Heart left ventricle (tissue), 16 donors: ENCODE measurements at regions of chr3 and their contacts with region 1.

Region 1: GRCh38 chr3:30779686-30780287 is 114.7 kb downstream of the GADL1 start:
- DNase-seq: no peak
- ATAC-seq: peak in 2 of 4 donors; percentile 36 to 41
- H3K4me3 ChIP-seq: no peak overlapping the region
- H3K27ac ChIP-seq: no peak overlapping the region
- H3K4me1 ChIP-seq: no peaks in the 10 kb centered on the region
- H3K27me3 ChIP-seq: no peaks in the 10 kb centered on the region
- CTCF ChIP-seq: peak in 11 of 12 donors; percentile 11 to 53 (median 28)
- POLR2A ChIP-seq: no peak

Region 2: GRCh38 chr3:29582273-29582672 is 1197.5 kb before region 1 on chr3:
- intact Hi-C with region 1: no loop called
- DNase-seq: no peak
- ATAC-seq: no peak
- H3K4me3 ChIP-seq: no peak overlapping the region
- H3K27ac ChIP-seq: no peak overlapping the region
- H3K4me1 ChIP-seq: peaks cover 0 to 35% (median under 1%) of the 10 kb centered on the region in 12 donors
- H3K27me3 ChIP-seq: no peaks in the 10 kb centered on the region
- CTCF ChIP-seq: no peak
- POLR2A ChIP-seq: no peak

Region 3: GRCh38 chr3:31004025-31004678 is 224.4 kb after region 1 on chr3:
- intact Hi-C with region 1: loop called in 1 of 10 experiments (anchors 10 kb)
- DNase-seq: no peak
- ATAC-seq: peak in 2 of 4 donors; percentile 45 to 47
- H3K4me3 ChIP-seq: no peak overlapping the region
- H3K27ac ChIP-seq: no peak overlapping the region
- H3K4me1 ChIP-seq: peaks cover 0 to 6% (median 0%) of the 10 kb centered on the region in 12 donors
- H3K27me3 ChIP-seq: no peaks in the 10 kb centered on the region
- CTCF ChIP-seq: no peak
- POLR2A ChIP-seq: no peak

Region 4: GRCh38 chr3:31132132-31132769 is 352.5 kb after region 1 on chr3:
- intact Hi-C with region 1: loop called in 2 of 10 experiments (anchors 5 kb)
- DNase-seq: no peak
- ATAC-seq: peak in 2 of 4 donors; percentile 52 to 61
- H3K4me3 ChIP-seq: no peak overlapping the region
- H3K27ac ChIP-seq: no peak overlapping the region
- H3K4me1 ChIP-seq: no peaks in the 10 kb centered on the region
- H3K27me3 ChIP-seq: no peaks in the 10 kb centered on the region
- CTCF ChIP-seq: peak in 11 of 12 donors; percentile 32 to 74 (median 62)
- POLR2A ChIP-seq: no peak

Region 5: GRCh38 chr3:31768479-31769123 is 988.8 kb after region 1 on chr3:
- intact Hi-C with region 1: loop called in 2 of 10 experiments (anchors 10 kb)
- DNase-seq: peak in 4 of 5 donors; percentile 43 to 62 (median 56)
- ATAC-seq: peak; percentile 62 to 74 (median 68)
- H3K4me3 ChIP-seq: no peak overlapping the region
- H3K27ac ChIP-seq: no peak overlapping the region
- H3K4me1 ChIP-seq: peaks cover 0 to 7% (median 0%) of the 10 kb centered on the region in 12 donors
- H3K27me3 ChIP-seq: no peaks in the 10 kb centered on the region
- CTCF ChIP-seq: peak; percentile 57 to 82 (median 68)
- POLR2A ChIP-seq: no peak